ENCODE measurements at regions of chr14 and their contacts with region 1.

Region 1: GRCh38 chr14:92880869-92881289 is 42.1 kb upstream of the CHGA start:
- DNase-seq: peak; percentile 80
- H3K4me3 Mint-ChIP-seq: no peak overlapping the region
- H3K27ac Mint-ChIP-seq: no peak overlapping the region
- H3K4me1 Mint-ChIP-seq: peaks cover 6% of the 10 kb centered on the region
- H3K27me3 Mint-ChIP-seq: peaks cover 66% of the 10 kb centered on the region
- CTCF ChIP-seq: peak; percentile 59

Region 2: GRCh38 chr14:92926180-92926848 is 45.4 kb after region 1 on chr14:
- CTCF ChIA-PET with region 1: interaction called, 6 read pairs
- POLR2A ChIA-PET with region 1: interaction called, 5 read pairs
- intact Hi-C with region 1: loop called (anchors 5 kb)
- DNase-seq: peak; percentile 93
- H3K4me3 Mint-ChIP-seq: peak overlapping the region; percentile 24
- H3K27ac Mint-ChIP-seq: peak overlapping the region; percentile 93
- H3K4me1 Mint-ChIP-seq: peaks cover 25% of the 10 kb centered on the region
- H3K27me3 Mint-ChIP-seq: peaks cover 14% of the 10 kb centered on the region
- CTCF ChIP-seq: no peak

Region 3: GRCh38 chr14:92951912-92952471 is 71.1 kb after region 1 on chr14:
- CTCF ChIA-PET with region 1: interaction called, 10 read pairs
- POLR2A ChIA-PET with region 1: interaction called, 7 read pairs
- intact Hi-C with region 1: loop called (anchors 2 kb)
- DNase-seq: peak; percentile 62
- H3K4me3 Mint-ChIP-seq: no peak overlapping the region
- H3K27ac Mint-ChIP-seq: no peak overlapping the region
- H3K4me1 Mint-ChIP-seq: peaks cover 8% of the 10 kb centered on the region
- H3K27me3 Mint-ChIP-seq: no peaks in the 10 kb centered on the region
- CTCF ChIP-seq: peak; percentile 90

Region 4: GRCh38 chr14:93160353-93160801 is 279.5 kb after region 1 on chr14:
- CTCF ChIA-PET with region 1: interaction called, 4 read pairs
- POLR2A ChIA-PET with region 1: no interaction called
- intact Hi-C with region 1: loop called (anchors 5 kb)
- DNase-seq: peak; percentile 54
- H3K4me3 Mint-ChIP-seq: no peak overlapping the region
- H3K27ac Mint-ChIP-seq: no peak overlapping the region
- H3K4me1 Mint-ChIP-seq: no peaks in the 10 kb centered on the region
- H3K27me3 Mint-ChIP-seq: no peaks in the 10 kb centered on the region
- CTCF ChIP-seq: peak; percentile 63

Region 5: GRCh38 chr14:93219103-93219726 is 338.3 kb after region 1 on chr14:
- CTCF ChIA-PET with region 1: interaction called, 5 read pairs
- POLR2A ChIA-PET with region 1: no interaction called
- intact Hi-C with region 1: loop called (anchors 5 kb)
- DNase-seq: peak; percentile 67
- H3K4me3 Mint-ChIP-seq: no peak overlapping the region
- H3K27ac Mint-ChIP-seq: no peak overlapping the region
- H3K4me1 Mint-ChIP-seq: no peaks in the 10 kb centered on the region
- H3K27me3 Mint-ChIP-seq: no peaks in the 10 kb centered on the region
- CTCF ChIP-seq: peak; percentile 78

Measured in MCF 10A (cell line).